Breast epithelium (tissue), 4 donors: ENCODE measurements at regions of chrX and their contacts with region 1.

Region 1: GRCh38 chrX:2484721-2485648 is 15.8 kb downstream of the DHRSX start:
- DNase-seq: no peak
- H3K4me3 ChIP-seq: peak overlapping the region; percentile 22 to 57 (median 31)
- H3K27ac ChIP-seq: peak overlapping the region; percentile 66 to 82
- H3K4me1 ChIP-seq: no peaks in the 10 kb centered on the region
- H3K27me3 ChIP-seq: no peaks in the 10 kb centered on the region
- CTCF ChIP-seq: no peak
- POLR2A ChIP-seq: no peak

Region 2: DNA sequence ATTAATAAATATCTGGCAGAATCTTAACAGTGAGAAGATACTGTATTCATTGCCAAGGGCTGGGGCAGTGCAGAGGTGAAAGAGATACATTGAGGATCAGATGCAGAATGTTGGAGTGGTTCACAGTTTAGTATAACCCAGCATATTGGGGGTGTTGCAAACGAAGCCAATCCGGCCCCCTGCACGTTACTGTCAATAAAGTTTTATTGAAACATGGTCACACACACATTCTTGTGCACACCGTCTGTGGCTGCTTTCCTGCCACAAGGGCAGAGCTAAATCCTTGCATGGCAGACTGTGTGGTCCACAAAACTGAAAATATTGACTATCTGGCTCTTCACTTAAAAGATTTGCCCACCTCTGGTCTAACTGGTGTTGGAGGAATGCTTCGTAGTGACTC is 1734.7 kb before region 1 on chrX:
- intact Hi-C with region 1: loop called (anchors 10 kb)
- DNase-seq: no peak
- H3K4me3 ChIP-seq: no peak overlapping the region
- H3K27ac ChIP-seq: no peak overlapping the region
- H3K4me1 ChIP-seq: no peaks in the 10 kb centered on the region
- H3K27me3 ChIP-seq: no peaks in the 10 kb centered on the region
- CTCF ChIP-seq: no peak
- POLR2A ChIP-seq: no peak

Region 3: DNA sequence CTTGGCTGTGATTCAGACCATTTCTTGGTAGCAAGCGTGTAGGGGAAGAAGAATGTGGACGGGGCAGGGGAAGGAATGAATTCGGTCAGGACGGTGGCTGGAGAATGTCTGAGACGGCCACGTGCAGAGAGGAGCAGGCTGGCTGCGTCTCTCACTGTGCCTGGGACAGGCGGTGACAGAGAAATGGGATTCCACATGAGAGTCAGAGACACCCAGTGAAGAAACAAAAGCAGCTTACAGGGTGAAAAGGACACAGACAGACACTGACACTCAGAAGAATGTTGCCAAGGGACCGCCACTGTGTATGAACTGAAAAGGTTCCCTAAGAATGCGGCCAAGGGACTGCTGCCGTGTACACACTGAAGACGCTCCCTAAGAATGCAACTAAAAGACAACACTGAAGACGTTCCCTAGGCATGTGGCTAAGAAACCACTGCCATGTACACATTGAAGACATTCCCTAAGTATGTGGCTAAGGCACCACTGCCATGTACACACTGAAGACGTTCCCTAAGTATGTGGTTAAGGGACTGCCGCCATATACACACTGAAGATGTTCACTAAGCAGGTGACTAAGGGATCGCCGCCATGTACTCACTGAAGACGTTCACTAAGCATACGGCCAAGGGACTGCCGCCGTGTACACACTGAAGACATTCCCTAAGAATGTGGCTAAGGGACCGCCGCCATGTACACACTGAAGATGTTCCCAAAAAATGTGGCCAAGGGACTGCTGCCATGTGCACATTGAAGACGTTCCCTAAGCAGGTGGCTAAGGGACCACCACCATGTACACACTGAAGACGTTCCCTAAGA is 33.3 kb before region 1 on chrX:
- intact Hi-C with region 1: no loop called
- DNase-seq: peak in 1 of 2 donors; percentile 18
- H3K4me3 ChIP-seq: no peak overlapping the region
- H3K27ac ChIP-seq: no peak overlapping the region
- H3K4me1 ChIP-seq: no peaks in the 10 kb centered on the region
- H3K27me3 ChIP-seq: no peaks in the 10 kb centered on the region
- CTCF ChIP-seq: no peak
- POLR2A ChIP-seq: no peak

Region 4: DNA sequence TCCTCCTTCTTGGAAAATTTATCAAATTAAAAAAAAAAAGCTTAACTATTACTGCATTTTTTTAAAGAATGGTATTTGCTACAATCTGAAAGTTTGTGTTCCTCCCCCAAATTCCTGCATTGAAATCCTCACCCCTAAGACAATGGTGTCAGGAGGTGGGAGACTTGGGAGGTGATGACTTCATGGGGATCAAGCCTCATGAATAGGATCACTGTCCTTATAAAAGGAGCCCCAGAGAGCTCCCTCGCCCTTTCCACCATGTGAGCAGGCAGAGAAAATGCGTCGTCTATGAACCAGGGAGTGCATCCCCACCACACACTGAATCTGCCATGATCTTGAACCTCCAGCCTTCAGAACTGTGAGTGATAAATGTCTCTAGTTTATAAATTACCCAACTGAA is 22.2 kb before region 1 on chrX:
- intact Hi-C with region 1: no loop called
- DNase-seq: no peak
- H3K4me3 ChIP-seq: no peak overlapping the region
- H3K27ac ChIP-seq: no peak overlapping the region
- H3K4me1 ChIP-seq: no peaks in the 10 kb centered on the region
- H3K27me3 ChIP-seq: no peaks in the 10 kb centered on the region
- CTCF ChIP-seq: no peak
- POLR2A ChIP-seq: no peak